AG04449 (cell line): ENCODE measurements at regions of chr2 and their contacts with region 1.

Region 1: DNA sequence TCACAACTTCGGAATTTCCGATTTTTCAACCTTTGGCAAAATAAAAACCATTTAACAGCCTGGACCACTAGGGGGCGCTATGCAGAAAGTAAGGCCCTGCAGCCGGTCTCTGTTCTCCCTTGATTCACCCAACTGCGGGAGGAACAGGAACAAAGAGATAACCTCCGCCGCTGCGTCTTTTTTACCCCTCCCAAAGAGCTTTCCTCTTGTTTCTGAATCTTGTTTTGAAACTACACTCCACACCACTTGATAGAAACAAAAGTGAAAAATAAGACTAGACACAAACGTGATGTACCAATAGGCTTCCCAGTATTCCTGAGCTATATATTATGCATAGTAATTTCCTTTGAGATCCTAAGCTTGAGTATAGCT is 231.2 kb downstream of the MYO3B start:
- DNase-seq: no peak
- H3K4me3 ChIP-seq: no peak overlapping the region
- CTCF ChIP-seq: peak; percentile 65

Region 2: GRCh38 chr2:170377500-170378207 is 31.5 kb before region 1 on chr2:
- CTCF ChIA-PET with region 1: interaction called, 10 read pairs
- POLR2A ChIA-PET with region 1: no interaction called
- DNase-seq: no peak
- H3K4me3 ChIP-seq: no peak overlapping the region
- CTCF ChIP-seq: no peak

Region 3: DNA sequence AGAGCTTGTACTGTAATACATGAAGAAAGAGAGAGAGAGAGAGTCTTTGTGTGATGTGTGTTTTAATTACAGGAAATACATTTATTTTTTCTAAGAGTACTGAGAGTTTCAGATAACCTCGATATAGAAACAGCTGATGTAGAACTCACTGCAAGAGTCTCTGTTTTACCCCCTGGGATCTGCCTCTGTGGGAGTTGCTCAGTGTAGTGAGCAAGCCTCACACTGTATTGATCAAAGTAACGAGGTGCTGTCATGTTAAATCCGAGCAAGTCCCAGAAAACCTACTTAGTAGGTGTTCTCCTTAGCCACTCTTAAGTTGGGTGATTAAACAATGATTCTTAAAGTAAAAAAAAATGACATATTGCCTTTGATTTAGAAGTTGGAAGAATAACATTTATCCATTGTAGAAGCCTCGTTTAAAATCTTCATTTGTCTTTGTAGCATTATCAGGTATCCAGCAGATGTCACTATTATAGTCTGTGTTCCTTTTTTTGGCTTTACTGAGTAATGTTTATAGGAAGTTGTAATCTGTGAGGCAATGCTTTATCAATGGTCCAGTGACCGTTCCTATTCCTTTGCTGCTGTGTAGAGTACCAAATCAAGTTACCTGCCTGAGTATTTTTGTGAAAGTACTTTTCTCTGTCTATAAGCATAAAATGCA is 12.2 kb before region 1 on chr2:
- CTCF ChIA-PET with region 1: interaction called, 16 read pairs
- POLR2A ChIA-PET with region 1: no interaction called
- DNase-seq: no peak
- H3K4me3 ChIP-seq: no peak overlapping the region
- CTCF ChIP-seq: no peak

Region 4: DNA sequence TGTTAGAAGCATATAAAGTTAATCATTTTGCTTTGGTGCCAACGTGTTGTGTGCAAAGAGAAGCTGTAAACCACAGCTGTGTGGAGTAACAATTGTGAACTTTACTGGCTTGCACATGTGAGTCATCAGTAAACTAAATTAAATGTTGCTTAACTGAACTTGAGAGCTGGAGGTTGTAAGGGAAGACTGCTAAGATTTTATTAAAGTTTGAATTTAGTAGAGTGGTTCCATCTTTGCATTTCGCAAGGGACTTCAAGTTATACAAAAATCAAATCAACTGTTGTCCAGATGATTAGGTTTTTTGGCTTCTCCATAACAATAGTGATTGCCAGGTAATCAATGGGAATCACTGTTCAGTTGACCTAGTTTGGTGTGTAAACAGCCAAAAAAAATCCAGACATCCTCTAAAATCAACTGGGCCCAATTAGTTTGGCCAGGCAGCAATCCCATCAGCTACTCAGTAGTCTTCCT is 16.2 kb after region 1 on chr2:
- CTCF ChIA-PET with region 1: interaction called, 29 read pairs
- POLR2A ChIA-PET with region 1: no interaction called
- DNase-seq: no peak
- H3K4me3 ChIP-seq: no peak overlapping the region
- CTCF ChIP-seq: no peak

Region 5: GRCh38 chr2:170695521-170696410 is 286.6 kb after region 1 on chr2:
- CTCF ChIA-PET with region 1: no interaction called
- POLR2A ChIA-PET with region 1: no interaction called
- DNase-seq: no peak
- H3K4me3 ChIP-seq: no peak overlapping the region
- CTCF ChIP-seq: no peak

Region 6: GRCh38 chr2:170806548-170806947 is 397.4 kb after region 1 on chr2:
- CTCF ChIA-PET with region 1: interaction called, 89 read pairs
- POLR2A ChIA-PET with region 1: no interaction called
- DNase-seq: no peak
- H3K4me3 ChIP-seq: no peak overlapping the region
- CTCF ChIP-seq: no peak